ENCODE measurements at regions of chr1 and their contacts with region 1.

Region 1: GRCh38 chr1:31564134-31564989 is 12.0 kb upstream of the TINAGL1 start:
- DNase-seq: peak in 1 of 5 donors; percentile 49
- ATAC-seq: peak in 3 of 4 donors; percentile 64 to 69 (median 65)
- H3K4me3 ChIP-seq: no peak overlapping the region
- H3K27ac ChIP-seq: peak overlapping the region in 3 of 12 donors; percentile 8 to 48 (median 11)
- H3K4me1 ChIP-seq: peaks cover 0 to 21% (median 9%) of the 10 kb centered on the region in 12 donors
- H3K27me3 ChIP-seq: no peaks in the 10 kb centered on the region
- CTCF ChIP-seq: peak; percentile 76 to 94 (median 87)
- POLR2A ChIP-seq: no peak

Region 2: GRCh38 chr1:31467005-31467700 is 97.2 kb before region 1 on chr1:
- intact Hi-C with region 1: no loop called
- DNase-seq: no peak
- ATAC-seq: no peak
- H3K4me3 ChIP-seq: no peak overlapping the region
- H3K27ac ChIP-seq: no peak overlapping the region
- H3K4me1 ChIP-seq: no peaks in the 10 kb centered on the region
- H3K27me3 ChIP-seq: peaks cover 0 to 10% (median 0%) of the 10 kb centered on the region in 9 donors
- CTCF ChIP-seq: no peak
- POLR2A ChIP-seq: no peak

Region 3: DNA sequence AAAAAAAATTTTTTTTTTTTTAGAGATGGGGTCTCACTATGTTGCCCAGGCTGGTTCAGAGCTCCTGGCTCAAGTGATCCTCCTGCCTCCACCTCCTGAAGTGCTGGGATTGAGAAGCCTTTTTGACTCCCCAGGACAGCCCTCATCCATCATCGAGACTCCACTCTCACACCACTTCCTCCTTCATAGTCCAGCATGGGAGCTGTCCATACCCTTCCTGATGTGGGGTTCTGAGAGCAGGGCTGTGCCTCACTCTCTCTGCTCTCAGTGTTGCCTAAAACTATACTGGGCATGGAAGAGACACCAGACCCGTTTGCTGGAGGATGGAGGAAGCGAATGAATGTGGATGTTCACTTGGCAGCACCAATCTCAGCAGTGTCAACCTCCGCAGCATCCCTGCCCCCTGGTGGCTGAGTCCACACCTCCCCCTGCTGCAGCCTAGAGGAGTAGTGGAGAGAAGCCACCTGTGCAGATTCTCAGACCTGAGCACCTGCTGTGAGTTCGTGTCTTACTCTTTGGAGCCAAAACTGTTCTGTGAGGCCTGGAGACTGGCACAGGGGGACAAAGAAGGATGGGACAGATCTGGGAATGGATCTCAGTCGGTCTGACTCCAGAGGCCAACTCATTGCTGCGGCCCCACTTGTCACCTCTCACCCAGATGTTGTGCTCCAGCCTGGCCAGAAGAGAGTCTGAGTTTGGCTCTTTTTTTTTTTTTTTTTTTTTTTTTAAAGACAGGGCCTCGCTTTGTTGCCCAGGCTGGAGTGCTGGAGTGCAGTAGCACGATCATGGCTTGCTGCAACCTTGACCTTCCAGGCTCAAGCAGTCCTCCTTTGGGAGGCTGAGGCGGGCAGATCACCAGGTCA is 29.6 kb after region 1 on chr1:
- intact Hi-C with region 1: loop called (anchors 1 to 2 kb)
- DNase-seq: peak; percentile 80 to 90 (median 83)
- ATAC-seq: peak; percentile 79 to 91 (median 85)
- H3K4me3 ChIP-seq: no peak overlapping the region
- H3K27ac ChIP-seq: no peak overlapping the region
- H3K4me1 ChIP-seq: peaks cover 0 to 39% (median 14%) of the 10 kb centered on the region in 12 donors
- H3K27me3 ChIP-seq: no peaks in the 10 kb centered on the region
- CTCF ChIP-seq: peak; percentile 79 to 91 (median 86)
- POLR2A ChIP-seq: no peak

Region 4: GRCh38 chr1:31617917-31618660 is 53.7 kb after region 1 on chr1:
- intact Hi-C with region 1: loop called in 2 of 10 experiments (anchors 1 kb)
- DNase-seq: peak in 4 of 5 donors; percentile 41 to 69 (median 52)
- ATAC-seq: peak in 3 of 4 donors; percentile 37 to 63 (median 53)
- H3K4me3 ChIP-seq: peak overlapping the region; percentile 39 to 79 (median 64)
- H3K27ac ChIP-seq: peak overlapping the region in 4 of 12 donors; percentile 12 to 60 (median 56)
- H3K4me1 ChIP-seq: peaks cover 3 to 48% (median 17%) of the 10 kb centered on the region in 12 donors
- H3K27me3 ChIP-seq: peaks cover 0 to 29% (median 4%) of the 10 kb centered on the region in 9 donors
- CTCF ChIP-seq: peak; percentile 76 to 93 (median 86)
- POLR2A ChIP-seq: no peak

Region 5: DNA sequence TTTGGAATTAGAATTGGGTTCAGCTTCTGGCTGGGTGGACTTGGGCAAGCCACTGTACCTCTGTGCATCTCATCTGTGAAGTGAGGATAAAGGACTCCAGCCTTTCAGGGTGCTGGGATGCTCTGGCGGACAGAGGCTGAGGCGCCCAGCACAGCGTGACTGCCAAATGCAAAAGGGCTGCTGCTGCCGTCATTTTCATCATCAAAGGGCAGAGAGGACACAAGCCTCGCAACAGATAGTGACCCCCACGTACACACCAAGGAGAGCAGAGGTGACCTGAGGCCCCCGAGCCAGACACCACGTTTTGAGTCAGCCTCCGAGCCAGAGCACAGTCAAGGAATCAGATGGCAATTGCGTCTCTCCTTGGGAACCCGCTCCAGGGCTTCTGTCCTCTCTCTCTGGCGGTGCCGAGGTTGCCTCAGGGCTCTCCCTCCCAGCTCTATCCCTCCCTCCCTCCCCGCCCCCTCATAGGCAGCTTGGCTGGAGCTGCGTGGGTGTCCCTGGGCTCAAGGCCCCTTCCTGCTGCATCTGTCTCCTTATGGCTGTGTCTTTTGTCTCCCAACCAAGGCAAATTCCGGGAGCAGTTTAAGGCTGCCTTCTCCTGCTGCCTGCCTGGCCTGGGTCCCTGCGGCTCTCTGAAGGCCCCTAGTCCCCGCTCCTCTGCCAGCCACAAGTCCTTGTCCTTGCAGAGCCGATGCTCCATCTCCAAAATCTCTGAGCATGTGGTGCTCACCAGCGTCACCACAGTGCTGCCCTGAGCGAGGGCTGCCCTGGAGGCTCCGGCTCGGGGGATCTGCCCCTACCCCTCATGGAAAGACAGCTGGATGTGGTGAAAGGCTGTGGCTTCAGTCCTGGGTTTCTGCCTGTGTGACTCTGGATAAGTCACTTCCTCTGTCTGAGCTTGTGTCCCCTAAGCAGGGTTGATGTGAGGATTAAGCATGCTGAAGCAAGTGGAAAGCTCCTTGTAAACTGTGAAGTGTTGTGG is 62.2 kb after region 1 on chr1:
- intact Hi-C with region 1: loop called in 1 of 10 experiments (anchors 5 kb)
- DNase-seq: peak in 2 of 5 donors; percentile 39 to 70
- ATAC-seq: peak in 3 of 4 donors; percentile 5 to 27 (median 6)
- H3K4me3 ChIP-seq: no peak overlapping the region
- H3K27ac ChIP-seq: peak overlapping the region; percentile 83 to 97 (median 90)
- H3K4me1 ChIP-seq: peaks cover 3 to 77% (median 41%) of the 10 kb centered on the region in 12 donors
- H3K27me3 ChIP-seq: no peaks in the 10 kb centered on the region
- CTCF ChIP-seq: no peak
- POLR2A ChIP-seq: no peak